Transverse colon (tissue), 4 donors: ENCODE measurements at regions of chr7 and their contacts with region 1.

Region 1: DNA sequence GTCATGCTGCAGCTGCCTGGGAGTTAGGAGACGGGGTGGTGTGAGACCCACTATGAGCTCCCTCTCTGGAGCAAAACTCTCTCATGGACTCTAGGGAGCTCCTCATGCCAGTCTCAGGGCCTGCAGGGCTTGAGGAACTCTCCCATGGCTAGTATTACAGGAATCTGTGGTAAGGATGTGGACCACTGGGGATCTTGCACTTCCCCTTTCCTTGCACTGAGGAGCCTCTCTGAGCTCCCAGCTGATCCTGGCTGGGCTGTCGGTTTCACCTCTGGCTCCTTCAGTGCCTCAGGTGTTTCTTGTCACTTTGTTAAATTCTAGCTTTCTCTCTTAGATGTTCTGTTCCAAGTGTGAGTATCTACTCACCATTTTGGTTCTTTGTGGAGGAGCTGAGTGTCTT is 71.6 kb upstream of the IMMP2L start:
- DNase-seq: no peak
- H3K4me3 ChIP-seq: no peak overlapping the region
- H3K27ac ChIP-seq: no peak overlapping the region
- H3K4me1 ChIP-seq: no peaks in the 10 kb centered on the region
- H3K27me3 ChIP-seq: no peaks in the 10 kb centered on the region
- CTCF ChIP-seq: no peak
- EP300 ChIP-seq: no peak
- POLR2A ChIP-seq: no peak

Region 2: GRCh38 chr7:109745677-109746410 is 1888.0 kb before region 1 on chr7:
- in situ Hi-C with region 1: no loop called
- intact Hi-C with region 1: loop called (anchors 5 kb)
- DNase-seq: no peak
- H3K4me3 ChIP-seq: no peak overlapping the region
- H3K27ac ChIP-seq: no peak overlapping the region
- H3K4me1 ChIP-seq: no peaks in the 10 kb centered on the region
- H3K27me3 ChIP-seq: no peaks in the 10 kb centered on the region
- CTCF ChIP-seq: no peak
- EP300 ChIP-seq: no peak
- POLR2A ChIP-seq: no peak

Region 3: GRCh38 chr7:112770084-112770483 is 1136.2 kb after region 1 on chr7:
- in situ Hi-C with region 1: no loop called
- intact Hi-C with region 1: no loop called
- DNase-seq: no peak
- H3K4me3 ChIP-seq: no peak overlapping the region
- H3K27ac ChIP-seq: no peak overlapping the region
- H3K4me1 ChIP-seq: no peaks in the 10 kb centered on the region
- H3K27me3 ChIP-seq: no peaks in the 10 kb centered on the region
- CTCF ChIP-seq: no peak
- EP300 ChIP-seq: no peak
- POLR2A ChIP-seq: no peak